BJ (cell line): ENCODE measurements at regions of chr22 and their contacts with region 1.

Region 1: GRCh38 chr22:39514373-39514973 is 5.9 kb upstream of the ATF4 start:
- DNase-seq: no peak
- H3K4me3 ChIP-seq: no peak overlapping the region
- H3K27me3 ChIP-seq: no peaks in the 10 kb centered on the region
- CTCF ChIP-seq: peak; percentile 85

Region 2: DNA sequence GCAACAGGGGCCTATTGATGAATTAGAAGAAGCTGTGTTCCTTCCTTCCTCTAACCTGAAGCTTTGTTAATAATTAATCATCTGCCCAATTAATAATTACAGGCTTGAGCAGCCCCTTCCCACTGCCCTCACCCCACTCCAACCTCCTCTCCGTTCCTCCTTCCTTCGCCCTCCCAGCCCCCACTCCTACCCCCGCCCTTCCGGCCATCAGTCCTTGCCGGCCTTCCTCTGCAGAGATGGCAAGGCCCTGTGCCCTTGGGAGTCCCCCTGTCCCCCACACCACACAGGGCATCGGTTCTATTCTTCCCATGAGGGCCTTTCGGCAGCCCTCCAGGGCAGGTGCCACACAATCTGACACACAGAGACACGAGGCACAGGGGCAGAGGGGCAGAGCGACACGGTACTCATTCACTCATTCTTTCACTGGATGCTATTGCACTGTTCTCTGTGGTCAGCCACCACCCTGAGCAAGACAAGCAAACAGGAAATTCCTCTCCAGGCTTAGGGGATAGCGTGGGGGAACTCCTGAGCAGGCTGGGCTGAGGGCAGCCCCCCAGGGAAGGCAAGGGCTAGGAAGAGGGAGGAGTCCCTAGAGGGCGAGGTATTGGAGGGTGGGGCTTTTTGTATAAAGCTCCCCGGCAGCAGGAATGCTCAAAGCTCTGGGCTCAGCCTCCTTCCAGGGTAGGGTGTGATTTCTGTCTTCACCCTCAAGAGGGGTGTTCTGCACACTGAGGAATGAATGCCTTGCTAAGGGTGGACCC is 42.9 kb before region 1 on chr22:
- CTCF ChIA-PET with region 1: interaction called, 10 read pairs
- POLR2A ChIA-PET with region 1: interaction called, 3 read pairs
- DNase-seq: peak; percentile 30
- H3K4me3 ChIP-seq: no peak overlapping the region
- H3K27me3 ChIP-seq: no peaks in the 10 kb centered on the region
- CTCF ChIP-seq: no peak

Region 3: DNA sequence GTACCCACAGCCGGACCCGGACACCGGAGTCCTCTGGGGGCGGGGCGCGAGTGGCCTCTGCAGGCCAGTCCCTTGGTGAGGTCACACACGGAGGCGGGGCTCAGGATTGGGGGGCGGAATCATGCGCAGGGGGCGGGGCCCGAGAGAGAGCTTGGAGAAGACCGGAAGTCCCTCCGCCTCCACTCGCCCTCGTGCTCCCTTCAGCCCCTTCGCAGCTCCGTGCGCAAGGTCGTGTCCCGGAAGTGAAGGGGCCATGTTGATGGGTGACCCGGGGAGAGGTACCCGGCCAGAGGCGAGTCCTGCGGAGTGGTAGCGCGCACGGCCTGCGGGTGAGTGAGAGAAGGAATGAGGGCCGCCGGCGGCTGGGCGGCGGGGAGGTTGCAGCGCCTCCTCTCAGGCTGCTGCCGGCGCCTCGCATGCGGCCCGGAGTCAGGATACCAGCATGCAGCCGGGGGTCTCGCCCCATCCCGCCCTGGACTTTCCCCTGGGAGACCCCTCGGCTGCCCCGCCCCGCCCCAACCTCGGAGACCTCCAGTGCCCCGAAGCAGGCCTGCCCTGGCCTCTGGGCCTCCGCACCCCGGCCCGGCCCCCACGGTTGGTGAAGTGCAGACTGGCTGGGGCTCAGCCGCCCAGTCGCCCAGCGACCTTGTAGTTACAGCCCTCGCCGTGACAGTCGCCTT is 12.2 kb before region 1 on chr22 and contains the start of gene MIEF1:
- CTCF ChIA-PET with region 1: interaction called, 20 read pairs
- POLR2A ChIA-PET with region 1: interaction called, 12 read pairs
- DNase-seq: peak; percentile 70
- H3K4me3 ChIP-seq: peak within 1 kb of the TSS; percentile 77
- H3K27me3 ChIP-seq: peaks cover 1% of the 10 kb centered on the region; the same call in 1 of the 2 replicates
- CTCF ChIP-seq: no peak; the same call in 1 of the 2 replicates
- polyA plus RNA-seq, gene MIEF1: 17.5 and 21.0 TPM in 2 replicates